ENCODE measurements at regions of chr16 and their contacts with region 1.

Region 1: GRCh38 chr16:82653550-82654511 is 27.1 kb downstream of the CDH13 start:
- DNase-seq: peak; percentile 87
- H3K4me3 Mint-ChIP-seq: peak overlapping the region; percentile 67
- H3K27ac Mint-ChIP-seq: peak overlapping the region; percentile 96
- H3K4me1 Mint-ChIP-seq: peaks cover 74% of the 10 kb centered on the region
- H3K27me3 Mint-ChIP-seq: no peaks in the 10 kb centered on the region

Region 2: DNA sequence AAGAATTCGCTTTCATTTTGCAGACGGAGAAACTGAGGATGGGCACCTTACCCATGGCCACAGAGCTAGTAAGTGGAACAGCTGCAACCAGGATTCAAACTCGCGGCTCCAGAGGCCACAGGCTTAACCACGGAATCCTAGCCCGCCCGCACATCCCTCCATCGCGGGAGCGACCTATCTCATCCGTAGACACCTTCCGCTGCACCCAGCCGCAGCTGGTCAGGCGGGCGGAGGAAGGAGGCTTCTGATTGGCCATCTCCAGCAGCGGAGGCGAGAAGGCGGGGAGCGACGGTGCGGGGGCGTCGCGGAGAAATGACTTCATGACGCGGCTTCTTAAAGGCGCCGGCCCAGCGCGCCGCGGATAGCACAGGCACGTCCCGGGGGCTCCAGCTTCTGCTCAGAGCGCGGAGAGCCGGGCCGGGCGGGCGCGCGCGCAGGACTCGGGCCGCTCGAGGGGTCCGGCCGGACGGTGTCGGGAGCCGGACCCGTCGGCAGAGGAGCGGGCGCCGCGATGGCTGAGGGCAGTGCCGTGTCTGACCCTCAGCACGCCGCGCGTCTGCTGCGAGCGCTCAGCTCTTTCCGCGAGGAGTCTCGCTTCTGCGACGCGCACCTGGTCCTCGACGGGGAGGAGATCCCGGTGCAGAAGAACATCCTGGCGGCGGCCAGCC is 1339.1 kb before region 1 on chr16 and contains the start of gene GAN:
- intact Hi-C with region 1: loop called (anchors 10 kb)
- DNase-seq: peak; percentile 98
- H3K4me3 Mint-ChIP-seq: peak within 1 kb of the TSS; percentile 88
- H3K27ac Mint-ChIP-seq: peak within 1 kb of the TSS; percentile 84
- H3K4me1 Mint-ChIP-seq: peaks cover 54% of the 10 kb centered on the region
- H3K27me3 Mint-ChIP-seq: no peaks in the 10 kb centered on the region
- total RNA-seq, gene GAN: 14.1 and 14.3 TPM in 2 replicates

Region 3: DNA sequence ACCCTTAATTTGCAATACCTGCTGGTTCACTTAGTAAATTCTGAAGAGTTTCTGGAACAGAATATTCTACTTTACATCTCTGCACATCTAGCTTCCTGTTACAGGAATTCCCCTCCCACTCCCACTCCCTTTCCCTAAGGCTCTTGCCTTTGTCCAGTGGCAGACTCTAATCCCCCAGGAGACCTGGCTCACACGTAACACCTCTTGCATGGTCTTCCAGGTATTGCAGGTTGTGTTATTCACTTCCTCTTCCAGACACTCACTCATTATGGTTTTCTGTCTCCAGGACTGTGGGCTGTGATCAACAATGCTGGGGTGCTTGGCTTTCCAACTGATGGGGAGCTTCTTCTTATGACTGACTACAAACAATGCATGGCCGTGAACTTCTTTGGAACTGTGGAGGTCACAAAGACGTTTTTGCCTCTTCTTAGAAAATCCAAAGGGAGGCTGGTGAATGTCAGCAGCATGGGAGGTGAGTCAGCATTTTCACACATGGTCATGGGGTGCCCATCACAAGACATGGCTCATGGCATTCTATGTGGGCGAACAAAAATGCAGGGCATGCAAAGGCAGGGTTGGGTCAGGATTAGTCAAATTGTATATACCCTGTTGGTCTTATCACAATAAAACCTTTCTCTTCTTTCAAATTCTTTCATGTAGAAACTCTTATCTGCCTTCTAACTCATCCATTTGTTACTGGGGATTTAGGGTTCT is 583.0 kb before region 1 on chr16:
- intact Hi-C with region 1: loop called (anchors 5 kb)
- DNase-seq: no peak
- H3K4me3 Mint-ChIP-seq: no peak overlapping the region
- H3K27ac Mint-ChIP-seq: no peak overlapping the region
- H3K4me1 Mint-ChIP-seq: peaks cover 6% of the 10 kb centered on the region
- H3K27me3 Mint-ChIP-seq: peaks cover 3% of the 10 kb centered on the region

Region 4: GRCh38 chr16:82192665-82193064 is 461.2 kb before region 1 on chr16:
- intact Hi-C with region 1: loop called (anchors 5 kb)
- DNase-seq: peak; percentile 77
- H3K4me3 Mint-ChIP-seq: peak overlapping the region; percentile 41
- H3K27ac Mint-ChIP-seq: peak overlapping the region; percentile 89
- H3K4me1 Mint-ChIP-seq: peaks cover 21% of the 10 kb centered on the region
- H3K27me3 Mint-ChIP-seq: peaks cover 7% of the 10 kb centered on the region

Region 5: DNA sequence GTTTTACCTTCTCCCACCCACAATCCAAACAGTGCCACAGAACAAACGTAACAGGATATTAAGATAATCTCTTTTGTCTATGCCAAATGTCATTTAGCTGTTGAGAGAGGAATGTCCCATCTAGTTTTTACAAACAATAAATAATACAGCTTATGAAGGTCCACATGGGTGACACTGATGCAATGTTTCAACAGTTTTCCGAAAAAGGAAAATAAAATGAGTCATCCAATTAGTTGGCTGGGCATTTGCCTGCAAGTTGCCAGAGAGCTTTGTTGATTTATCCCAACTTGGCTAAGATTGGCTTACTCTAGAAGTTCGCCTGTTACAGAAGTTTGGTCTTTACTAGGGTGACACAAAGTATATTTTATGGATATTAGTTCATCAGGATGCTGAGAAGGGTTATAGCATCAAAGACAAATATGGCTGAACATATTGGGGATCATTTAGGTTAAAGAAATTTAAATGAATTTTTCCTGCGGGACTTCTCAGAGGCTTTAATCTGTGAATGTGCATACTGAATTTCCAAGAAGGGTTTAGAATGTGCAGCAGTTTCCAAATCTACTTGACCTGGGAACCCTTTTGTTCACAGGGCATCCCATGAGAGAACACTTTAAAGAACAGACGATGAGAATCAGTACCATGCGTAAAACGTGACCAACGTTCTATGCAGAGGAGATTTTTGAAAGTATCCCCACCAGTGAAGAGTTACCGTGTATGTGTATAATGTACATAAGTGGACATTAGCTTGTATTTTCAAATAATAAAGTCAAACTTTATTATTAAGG is 46.1 kb after region 1 on chr16:
- intact Hi-C with region 1: loop called (anchors 2 kb)
- DNase-seq: no peak
- H3K4me3 Mint-ChIP-seq: no peak overlapping the region
- H3K27ac Mint-ChIP-seq: no peak overlapping the region
- H3K4me1 Mint-ChIP-seq: peaks cover 17% of the 10 kb centered on the region
- H3K27me3 Mint-ChIP-seq: peaks cover 3% of the 10 kb centered on the region

Region 6: GRCh38 chr16:82832821-82833220 is 179.0 kb after region 1 on chr16:
- intact Hi-C with region 1: no loop called
- DNase-seq: no peak
- H3K4me3 Mint-ChIP-seq: no peak overlapping the region
- H3K27ac Mint-ChIP-seq: no peak overlapping the region
- H3K4me1 Mint-ChIP-seq: no peaks in the 10 kb centered on the region
- H3K27me3 Mint-ChIP-seq: no peaks in the 10 kb centered on the region

Measured in activated CD4-positive, alpha-beta T cell treated with anti-CD3 and anti-CD28 coated beads, Interleukin-2, amount 10 ng/mL, durations not matched to agents 24 days and 14 days (primary cell).